ENCODE measurements at regions of chr15 and their contacts with region 1.

Region 1: GRCh38 chr15:39586387-39587171 is 5.7 kb downstream of the THBS1 start:
- DNase-seq: no peak

Region 2: DNA sequence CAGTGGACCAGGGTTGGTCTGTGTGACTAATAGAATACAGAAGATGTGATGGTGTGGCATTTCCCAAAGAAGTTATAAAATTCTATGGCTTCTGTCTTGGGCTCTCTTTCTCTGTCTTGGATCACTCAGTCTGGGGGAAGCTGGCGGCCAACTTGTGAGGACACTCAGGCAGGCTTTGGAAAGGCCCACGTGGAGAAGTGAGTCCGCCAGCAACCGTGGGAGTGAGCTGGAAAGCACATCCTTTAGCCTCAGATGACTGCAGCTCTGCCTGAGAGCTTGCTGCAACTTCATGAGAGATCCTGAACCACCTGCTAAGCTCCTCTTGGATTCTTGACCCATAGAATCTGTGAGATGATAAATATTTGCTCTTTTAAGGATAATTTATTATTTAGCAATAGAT is 950.0 kb before region 1 on chr15:
- intact Hi-C with region 1: loop called in 1 of 2 experiments (anchors 5 kb)
- DNase-seq: peak; percentile 82

Region 3: DNA sequence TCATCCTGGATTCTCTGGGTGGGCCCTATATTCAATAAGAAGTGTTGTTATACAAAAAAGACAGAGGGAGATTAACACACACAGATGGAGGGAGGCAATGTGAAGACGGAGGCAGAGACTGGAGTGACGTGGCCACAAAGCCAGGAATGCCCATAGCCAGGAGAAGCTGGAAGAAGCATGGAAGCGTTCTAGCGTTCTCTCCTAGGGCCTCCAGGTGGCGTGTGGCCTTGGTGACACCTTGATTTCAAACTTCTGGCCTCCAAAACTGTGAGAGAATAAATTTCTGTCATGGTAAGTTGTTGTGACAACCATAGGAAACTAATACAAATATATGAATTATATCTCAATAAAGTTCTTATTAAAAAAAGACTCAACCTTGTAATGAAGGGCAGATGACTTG is 15.6 kb after region 1 on chr15:
- intact Hi-C with region 1: no loop called
- DNase-seq: no peak

Measured in posterior vena cava (tissue), 2 donors.